ENCODE measurements at regions of chr4 and their contacts with region 1.

Region 1: DNA sequence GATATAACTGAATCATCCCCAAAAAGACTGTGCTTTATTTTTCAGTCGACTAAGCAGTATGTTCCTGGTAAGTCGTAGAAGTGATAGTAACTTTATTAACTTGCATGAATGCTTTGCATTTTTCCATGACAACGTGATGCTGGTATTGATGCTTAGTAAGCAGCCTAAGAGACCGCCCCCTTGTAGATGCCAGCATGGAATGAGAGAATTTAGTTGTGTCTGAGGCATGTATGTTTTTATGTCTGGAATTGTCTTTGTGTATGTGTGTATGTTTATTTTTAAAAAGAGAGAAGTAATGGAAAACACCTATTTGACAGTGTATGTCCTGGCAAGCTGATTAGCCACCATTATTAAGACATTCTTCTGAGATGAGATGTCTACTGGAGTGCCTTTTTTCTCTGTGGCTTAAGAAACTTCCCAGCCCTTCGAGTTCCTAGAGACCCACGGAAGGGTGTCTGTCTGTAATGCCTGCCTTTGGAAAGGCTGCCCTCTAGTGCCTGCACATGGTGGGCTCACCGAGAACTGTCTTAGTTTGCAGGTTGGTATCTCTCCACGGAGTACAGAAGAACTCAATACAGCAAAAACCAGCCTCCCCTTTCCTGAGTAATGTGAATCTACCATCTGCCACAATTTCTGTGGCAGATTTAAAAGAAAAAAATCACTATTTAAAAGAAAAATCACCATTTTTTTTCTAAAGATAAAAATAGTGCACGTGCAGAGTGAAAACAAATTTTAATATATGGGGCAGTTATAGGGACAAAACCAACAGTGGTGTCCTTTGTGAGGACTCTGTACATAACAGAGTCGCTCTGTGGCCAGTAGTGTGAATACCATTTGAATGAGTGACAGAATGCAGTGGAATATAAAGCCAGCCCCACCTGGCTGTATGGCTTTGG is 85.9 kb downstream of the AASDH start:
- DNase-seq: no peak

Region 2: DNA sequence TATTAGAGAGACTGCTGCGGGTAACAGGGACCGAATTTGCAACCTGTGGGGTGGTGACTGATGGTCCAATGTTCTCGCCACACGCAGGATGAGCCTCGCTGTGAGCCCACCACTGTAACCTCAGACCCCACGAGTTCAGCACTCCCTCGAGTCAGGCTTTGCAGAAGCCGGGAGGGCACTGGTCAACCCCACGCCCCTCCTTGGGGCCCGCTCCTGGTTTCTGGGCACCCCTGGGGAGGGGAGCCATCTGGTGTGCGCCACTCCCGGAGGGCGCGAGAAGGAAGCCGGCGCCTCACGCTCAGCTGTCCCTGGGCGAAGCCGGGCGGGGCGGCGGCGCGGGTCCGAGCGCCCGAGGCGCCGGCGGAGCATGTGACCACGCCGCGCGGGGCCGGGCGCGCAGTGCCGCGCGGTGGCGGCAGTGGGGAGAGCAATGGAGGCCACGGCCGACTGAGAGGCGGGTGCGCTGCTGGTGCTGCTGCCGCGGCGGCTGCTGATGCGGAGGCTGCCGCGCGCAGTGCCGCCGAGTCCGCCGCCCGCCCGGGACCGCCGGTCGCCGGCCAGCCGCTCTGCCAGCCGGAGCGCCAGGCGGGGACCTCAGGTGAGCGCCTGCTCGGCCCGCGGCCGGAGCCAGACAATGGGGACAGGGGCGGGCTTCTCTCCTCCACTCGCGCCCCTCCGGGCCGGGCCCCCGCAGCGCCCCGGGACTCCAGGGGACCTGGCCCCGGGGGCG is 252.6 kb before region 1 on chr4:
- intact Hi-C with region 1: loop called (anchors 10 kb)
- DNase-seq: no peak